Activated CD8-positive, alpha-beta memory T cell treated with anti-CD3 and anti-CD28 coated beads, Interleukin-2, amount 10 ng/mL, durations not matched to agents 7 days and 5 days (primary cell): ENCODE measurements at regions of chr11 and their contacts with region 1.

Region 1: GRCh38 chr11:32006799-32007388 is 84.0 kb upstream of the RCN1 start:
- DNase-seq: peak; percentile 50
- ATAC-seq: no peak
- H3K4me3 Mint-ChIP-seq: no peak overlapping the region
- H3K27ac Mint-ChIP-seq: no peak overlapping the region
- H3K4me1 Mint-ChIP-seq: peaks cover 4% of the 10 kb centered on the region
- H3K27me3 Mint-ChIP-seq: peaks cover 43% of the 10 kb centered on the region

Region 2: GRCh38 chr11:31943056-31943780 is 63.7 kb before region 1 on chr11:
- CTCF ChIA-PET with region 1: no interaction called
- DNase-seq: no peak
- ATAC-seq: no peak
- H3K4me3 Mint-ChIP-seq: no peak overlapping the region
- H3K27ac Mint-ChIP-seq: no peak overlapping the region
- H3K4me1 Mint-ChIP-seq: peaks cover 7% of the 10 kb centered on the region
- H3K27me3 Mint-ChIP-seq: peaks cover 34% of the 10 kb centered on the region

Region 3: DNA sequence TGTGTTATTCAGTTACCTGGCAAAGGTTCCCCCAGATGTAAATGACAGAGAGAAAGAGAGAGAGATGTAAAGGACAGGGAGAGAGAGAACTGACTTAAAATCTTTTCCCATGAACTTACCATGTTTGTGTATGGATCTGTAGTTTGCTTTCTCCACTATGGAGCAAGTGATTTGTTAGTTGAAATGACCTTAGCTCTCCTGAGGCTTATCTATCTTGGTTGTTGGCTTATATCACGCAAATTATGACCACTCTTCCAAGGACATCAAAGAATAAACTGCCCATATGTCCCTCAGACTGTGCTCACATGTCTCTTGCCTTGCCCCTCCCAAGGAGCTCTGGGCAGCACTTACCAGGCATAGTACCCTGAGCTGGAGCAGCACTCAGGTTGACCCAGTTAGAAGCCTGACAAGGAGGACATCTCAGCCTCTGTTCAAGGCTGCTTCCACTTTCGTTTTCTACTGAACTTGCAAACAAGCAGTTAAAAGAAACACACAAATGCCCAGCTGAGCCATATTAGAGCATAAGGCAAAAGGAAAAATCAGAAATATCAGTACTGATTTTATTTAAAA is 11.3 kb before region 1 on chr11:
- CTCF ChIA-PET with region 1: interaction called, 13 read pairs
- DNase-seq: peak; percentile 56
- ATAC-seq: peak; percentile 93
- H3K4me3 Mint-ChIP-seq: peak overlapping the region; percentile 73
- H3K27ac Mint-ChIP-seq: peak overlapping the region; percentile 78
- H3K4me1 Mint-ChIP-seq: peaks cover 18% of the 10 kb centered on the region
- H3K27me3 Mint-ChIP-seq: peaks cover 15% of the 10 kb centered on the region

Region 4: DNA sequence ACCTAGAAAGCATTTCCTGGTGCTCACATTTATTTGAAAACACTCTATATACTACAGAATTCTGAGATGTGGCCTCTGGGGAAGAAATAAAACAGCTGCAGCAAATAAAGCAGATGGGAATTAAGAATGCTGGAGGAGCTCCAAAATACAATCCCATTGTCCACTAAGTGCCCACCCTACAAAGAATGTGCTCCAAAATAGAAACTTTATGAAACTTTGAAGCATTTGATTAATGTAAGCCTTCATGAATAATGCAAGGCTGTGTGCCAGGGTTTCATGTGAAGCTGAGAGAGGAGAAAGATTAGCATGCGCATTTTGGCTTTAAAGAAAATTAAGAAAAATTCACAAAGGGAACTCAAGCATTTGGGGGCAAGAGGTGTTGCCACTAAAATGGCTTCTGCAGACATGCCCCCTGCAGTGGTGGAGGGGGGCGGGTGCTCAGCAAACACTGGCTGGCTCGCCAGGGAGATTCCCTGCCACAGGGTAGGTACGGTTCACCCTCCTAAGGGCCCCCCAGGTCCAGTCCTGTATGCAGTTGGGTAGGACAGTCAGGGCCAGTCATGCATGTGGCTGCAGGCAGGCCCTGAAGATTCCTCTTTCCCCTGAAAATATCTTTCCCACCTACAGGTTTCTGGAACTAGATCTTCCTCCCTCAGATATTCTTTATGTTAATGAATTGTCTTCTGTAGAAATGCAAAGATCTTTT is 37.4 kb after region 1 on chr11:
- CTCF ChIA-PET with region 1: no interaction called
- DNase-seq: no peak
- ATAC-seq: no peak
- H3K4me3 Mint-ChIP-seq: no peak overlapping the region
- H3K27ac Mint-ChIP-seq: no peak overlapping the region
- H3K4me1 Mint-ChIP-seq: no peaks in the 10 kb centered on the region
- H3K27me3 Mint-ChIP-seq: peaks cover 34% of the 10 kb centered on the region